Pancreas (tissue), 10 donors: ENCODE measurements at regions of chr20 and their contacts with region 1.

Region 1: GRCh38 chr20:8722276-8722928 is 346.5 kb upstream of the PLCB4 start:
- DNase-seq: peak in 3 of 6 donors; percentile 15 to 54 (median 19)
- ATAC-seq: peak; percentile 82 to 92 (median 91)
- H3K4me3 ChIP-seq: no peak overlapping the region
- H3K27ac ChIP-seq: no peak overlapping the region
- H3K4me1 ChIP-seq: no peaks in the 10 kb centered on the region
- H3K27me3 ChIP-seq: no peaks in the 10 kb centered on the region
- CTCF ChIP-seq: peak in 3 of 4 donors; percentile 51 to 71 (median 62)

Region 2: DNA sequence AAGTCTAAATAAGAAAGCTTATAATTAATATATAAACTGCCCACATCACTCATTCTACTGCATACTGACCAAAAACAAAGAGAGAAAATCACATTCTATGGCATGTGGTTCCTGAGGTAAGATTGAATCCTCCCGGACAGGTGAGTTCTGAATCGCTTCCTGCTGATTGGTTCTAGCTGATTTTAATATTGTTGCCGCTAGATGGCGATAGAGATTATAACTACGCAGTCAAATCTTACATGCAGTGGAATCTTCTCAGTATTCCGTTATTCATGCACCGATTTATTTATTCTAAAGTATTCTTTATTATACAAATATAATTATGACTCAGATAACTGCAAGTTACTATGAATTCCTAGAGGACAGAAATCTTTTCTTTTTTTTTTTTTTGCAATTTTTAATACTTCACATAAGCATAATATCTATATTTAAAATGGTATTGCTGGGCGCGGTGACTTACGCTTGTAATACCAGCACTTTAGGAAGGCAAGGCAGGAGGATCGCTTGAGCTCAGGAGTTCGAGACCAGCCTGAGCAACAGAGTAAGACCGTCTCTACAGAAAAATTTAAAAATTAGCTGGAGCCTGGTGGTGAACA is 678.6 kb before region 1 on chr20:
- intact Hi-C with region 1: loop called in 1 of 3 experiments (anchors 10 kb)
- DNase-seq: peak in 2 of 6 donors; percentile 9 to 19
- ATAC-seq: peak; percentile 73 to 95 (median 90)
- H3K4me3 ChIP-seq: no peak overlapping the region
- H3K27ac ChIP-seq: no peak overlapping the region
- H3K4me1 ChIP-seq: no peaks in the 10 kb centered on the region
- H3K27me3 ChIP-seq: no peaks in the 10 kb centered on the region
- CTCF ChIP-seq: peak; percentile 52 to 77 (median 65)

Region 3: GRCh38 chr20:8050157-8050837 is 672.1 kb before region 1 on chr20:
- intact Hi-C with region 1: loop called in 2 of 3 experiments (anchors 10 kb)
- DNase-seq: no peak
- ATAC-seq: no peak
- H3K4me3 ChIP-seq: no peak overlapping the region
- H3K27ac ChIP-seq: no peak overlapping the region
- H3K4me1 ChIP-seq: no peaks in the 10 kb centered on the region
- H3K27me3 ChIP-seq: no peaks in the 10 kb centered on the region
- CTCF ChIP-seq: no peak

Region 4: GRCh38 chr20:8664778-8665177 is 57.6 kb before region 1 on chr20:
- intact Hi-C with region 1: no loop called
- DNase-seq: no peak
- ATAC-seq: no peak
- H3K4me3 ChIP-seq: no peak overlapping the region
- H3K27ac ChIP-seq: no peak overlapping the region
- H3K4me1 ChIP-seq: no peaks in the 10 kb centered on the region
- H3K27me3 ChIP-seq: no peaks in the 10 kb centered on the region
- CTCF ChIP-seq: no peak

Region 5: GRCh38 chr20:8912731-8913130 is 190.3 kb after region 1 on chr20:
- intact Hi-C with region 1: no loop called
- DNase-seq: no peak
- ATAC-seq: no peak
- H3K4me3 ChIP-seq: no peak overlapping the region
- H3K27ac ChIP-seq: no peak overlapping the region
- H3K4me1 ChIP-seq: no peaks in the 10 kb centered on the region
- H3K27me3 ChIP-seq: no peaks in the 10 kb centered on the region
- CTCF ChIP-seq: no peak